ENCODE measurements at regions of chr22 and their contacts with region 1.

Region 1: DNA sequence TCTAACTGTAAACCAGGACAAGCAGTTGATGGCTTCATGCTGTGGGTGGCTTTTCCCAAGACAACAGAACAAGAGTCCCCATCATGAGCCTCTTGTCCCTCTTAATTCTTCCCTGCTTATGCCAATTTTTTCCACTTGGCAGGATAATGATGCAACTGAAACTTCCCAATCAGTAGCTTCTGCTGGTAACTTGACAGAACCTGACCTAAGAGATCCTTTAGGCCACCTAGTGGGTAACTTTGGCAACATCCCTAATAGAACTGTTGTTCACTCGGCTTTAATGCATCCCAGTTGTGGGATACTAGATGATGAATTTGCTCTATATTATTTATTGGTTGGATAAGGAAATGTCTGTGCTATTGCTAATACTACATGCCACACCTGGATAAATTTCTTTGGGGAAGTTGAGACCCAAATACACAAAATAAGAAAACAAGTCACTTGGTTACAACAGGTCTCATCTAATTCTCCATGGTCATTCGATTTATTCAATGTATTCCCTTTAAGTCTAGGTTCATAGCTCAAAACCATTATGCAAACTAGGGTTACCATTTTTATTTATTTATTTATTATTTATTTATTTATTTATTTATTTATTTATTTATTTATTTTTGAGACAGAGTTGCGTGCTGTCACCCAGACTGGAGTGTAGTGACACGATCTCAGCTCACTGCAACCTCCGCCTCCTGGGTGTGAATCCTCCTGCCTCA is 41.4 kb upstream of the NFAM1 start:
- DNase-seq: no peak
- ATAC-seq: peak; percentile 76
- H3K4me3 Mint-ChIP-seq: no peak overlapping the region
- H3K27ac Mint-ChIP-seq: no peak overlapping the region
- H3K4me1 Mint-ChIP-seq: peaks cover 4% of the 10 kb centered on the region
- H3K27me3 Mint-ChIP-seq: peaks cover 21% of the 10 kb centered on the region
- CTCF ChIP-seq: peak; percentile 31

Region 2: DNA sequence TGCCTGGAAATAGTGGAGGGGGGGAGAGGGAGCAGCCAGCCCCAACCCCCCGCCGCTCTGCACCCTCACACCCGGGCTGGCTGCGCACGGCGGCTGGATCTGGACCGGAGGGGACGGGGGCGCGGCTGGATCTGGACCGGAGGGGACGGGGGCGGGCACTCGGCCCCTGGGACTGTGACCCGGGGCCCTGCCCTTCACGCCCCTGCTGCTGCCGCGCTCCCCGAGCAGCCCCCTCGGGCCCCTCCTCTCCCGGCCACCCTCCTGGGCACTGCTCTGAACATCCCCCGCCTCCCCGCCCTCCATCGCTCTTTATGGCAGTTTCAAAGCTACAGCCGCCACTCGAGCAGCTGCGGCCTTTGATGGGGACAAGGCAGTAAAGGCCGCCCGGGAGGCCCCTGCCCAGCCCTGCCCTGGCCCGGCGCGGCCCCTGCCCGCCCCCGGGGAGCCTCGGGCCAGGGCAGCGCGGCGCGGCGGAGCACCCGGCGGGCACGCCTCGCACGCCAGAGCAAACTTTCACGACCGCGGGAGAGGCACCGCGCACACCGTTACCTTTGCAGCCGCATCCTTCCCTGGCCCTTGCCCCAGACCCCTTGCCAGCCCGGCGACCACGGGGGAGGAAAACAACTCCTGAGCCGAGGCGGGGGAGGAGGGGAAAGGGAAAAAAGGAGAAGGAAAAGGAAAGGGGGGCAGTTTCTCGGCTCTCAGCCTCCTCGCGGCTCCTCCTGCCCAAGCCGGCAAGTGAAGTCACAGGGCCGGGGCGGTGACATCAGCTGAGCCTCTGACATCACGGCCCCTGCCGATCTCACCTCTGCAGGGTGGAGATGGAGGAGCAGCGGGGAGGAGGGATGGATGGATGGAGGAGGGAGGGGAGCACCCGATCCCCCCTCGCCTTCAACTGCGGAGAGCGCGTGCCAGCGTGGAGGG is 190.1 kb before region 1 on chr22:
- CTCF ChIA-PET with region 1: no interaction called
- POLR2A ChIA-PET with region 1: no interaction called
- DNase-seq: no peak
- ATAC-seq: peak; percentile 32; the same call in 1 of the 2 replicates
- H3K4me3 Mint-ChIP-seq: peak overlapping the region; percentile 61
- H3K27ac Mint-ChIP-seq: no peak overlapping the region
- H3K4me1 Mint-ChIP-seq: peaks cover 8% of the 10 kb centered on the region
- H3K27me3 Mint-ChIP-seq: peaks cover 66% of the 10 kb centered on the region
- CTCF ChIP-seq: no peak

Region 3: GRCh38 chr22:42452456-42452855 is 21.2 kb before region 1 on chr22:
- CTCF ChIA-PET with region 1: interaction called, 10 read pairs
- POLR2A ChIA-PET with region 1: no interaction called
- DNase-seq: no peak
- ATAC-seq: no peak
- H3K4me3 Mint-ChIP-seq: no peak overlapping the region
- H3K27ac Mint-ChIP-seq: no peak overlapping the region
- H3K4me1 Mint-ChIP-seq: no peaks in the 10 kb centered on the region
- H3K27me3 Mint-ChIP-seq: peaks cover 13% of the 10 kb centered on the region
- CTCF ChIP-seq: no peak

Region 4: DNA sequence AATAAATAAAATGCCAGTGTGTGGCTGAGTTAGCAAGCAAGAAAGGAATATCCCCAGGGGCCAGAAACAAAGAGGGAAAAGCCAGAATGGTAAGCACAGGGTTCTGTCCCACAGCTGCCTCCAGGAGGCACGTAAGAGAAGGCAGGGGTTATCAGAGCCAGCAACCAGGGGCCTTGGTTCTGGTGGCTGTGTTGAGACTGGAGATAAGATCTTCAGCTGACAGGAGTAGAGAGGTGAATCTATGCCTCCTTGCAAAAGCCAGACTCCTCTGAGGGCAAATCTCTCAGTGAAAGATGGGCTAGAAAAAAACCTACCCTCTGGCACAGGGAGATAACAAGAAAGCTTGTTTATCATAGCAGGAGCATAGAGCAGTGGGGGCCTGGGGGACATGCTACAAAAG is 11.6 kb before region 1 on chr22:
- CTCF ChIA-PET with region 1: interaction called, 17 read pairs
- POLR2A ChIA-PET with region 1: interaction called, 3 read pairs
- DNase-seq: no peak
- ATAC-seq: no peak
- H3K4me3 Mint-ChIP-seq: no peak overlapping the region
- H3K27ac Mint-ChIP-seq: 0 out of 2 replicates have a peak overlapping the region, but pooled peaks have one; percentile 8
- H3K4me1 Mint-ChIP-seq: peaks cover 34% of the 10 kb centered on the region
- H3K27me3 Mint-ChIP-seq: peaks cover 18% of the 10 kb centered on the region
- CTCF ChIP-seq: no peak